Ovary (tissue), 10 donors: ENCODE measurements at regions of chr12 and their contacts with region 1.

Region 1: DNA sequence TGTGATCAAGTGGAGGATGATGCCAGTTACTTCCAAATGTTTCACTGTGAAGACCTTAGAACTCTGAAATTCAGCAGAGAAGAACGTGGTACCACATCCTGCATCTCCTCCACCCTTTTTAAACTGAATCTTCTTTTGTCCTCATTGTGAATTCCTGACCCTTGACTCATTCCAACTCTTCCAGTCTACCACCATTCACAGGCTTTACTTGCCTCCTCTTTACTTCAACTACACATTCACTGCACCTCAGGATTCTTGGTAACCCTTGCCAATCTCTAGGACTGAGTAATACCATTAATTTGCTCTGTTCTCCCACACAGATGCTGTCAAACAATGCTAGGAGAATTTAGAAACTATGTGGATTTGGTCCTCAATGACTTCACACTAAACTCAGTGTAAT is 37.3 kb downstream of the PPP1R12A start:
- DNase-seq: no peak
- H3K4me3 ChIP-seq: no peak overlapping the region
- H3K27ac ChIP-seq: no peak overlapping the region
- H3K4me1 ChIP-seq: peaks cover 6% of the 10 kb centered on the region
- H3K27me3 ChIP-seq: no peaks in the 10 kb centered on the region
- CTCF ChIP-seq: no peak
- EP300 ChIP-seq: no peak
- POLR2A ChIP-seq: no peak

Region 2: GRCh38 chr12:79886917-79887519 is 10.6 kb before region 1 on chr12:
- intact Hi-C with region 1: no loop called
- DNase-seq: no peak
- H3K4me3 ChIP-seq: no peak overlapping the region
- H3K27ac ChIP-seq: no peak overlapping the region
- H3K4me1 ChIP-seq: peaks cover 4% of the 10 kb centered on the region
- H3K27me3 ChIP-seq: no peaks in the 10 kb centered on the region
- CTCF ChIP-seq: peak in 1 of 3 donors; percentile 28
- EP300 ChIP-seq: no peak
- POLR2A ChIP-seq: no peak

Region 3: DNA sequence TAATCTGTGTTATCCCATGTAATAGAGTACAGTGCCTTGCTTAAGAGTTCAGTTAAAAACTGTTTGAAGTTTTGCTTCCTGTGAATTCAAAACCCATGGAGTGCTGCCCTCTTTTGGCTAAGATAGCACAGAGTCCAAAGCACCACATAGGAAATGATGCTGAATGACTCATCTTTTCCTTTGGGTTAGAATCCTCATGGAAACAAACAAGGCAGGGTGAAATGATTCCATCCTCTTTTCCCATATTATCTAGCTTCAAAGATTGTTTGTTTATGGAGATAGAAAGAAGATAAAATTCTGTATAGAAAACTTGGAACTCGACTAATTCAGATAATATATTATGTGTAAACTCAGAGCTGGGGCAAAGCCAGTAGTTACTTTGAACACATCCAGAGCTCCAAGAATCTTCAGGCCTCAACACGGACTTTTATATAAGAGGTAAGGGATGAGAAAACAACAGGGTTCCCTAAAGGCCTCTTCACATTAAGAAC is 289.2 kb after region 1 on chr12:
- intact Hi-C with region 1: loop called in 1 of 4 experiments (anchors 5 kb)
- DNase-seq: peak in 4 of 5 donors; percentile 26 to 81 (median 58)
- H3K4me3 ChIP-seq: no peak overlapping the region
- H3K27ac ChIP-seq: peak overlapping the region; percentile 17 to 66
- H3K4me1 ChIP-seq: peaks cover 2% of the 10 kb centered on the region
- H3K27me3 ChIP-seq: no peaks in the 10 kb centered on the region
- CTCF ChIP-seq: peak; percentile 64 to 78 (median 72)
- EP300 ChIP-seq: peak; percentile 54
- POLR2A ChIP-seq: no peak